ENCODE measurements at regions of chr2 and their contacts with region 1.

Region 1: DNA sequence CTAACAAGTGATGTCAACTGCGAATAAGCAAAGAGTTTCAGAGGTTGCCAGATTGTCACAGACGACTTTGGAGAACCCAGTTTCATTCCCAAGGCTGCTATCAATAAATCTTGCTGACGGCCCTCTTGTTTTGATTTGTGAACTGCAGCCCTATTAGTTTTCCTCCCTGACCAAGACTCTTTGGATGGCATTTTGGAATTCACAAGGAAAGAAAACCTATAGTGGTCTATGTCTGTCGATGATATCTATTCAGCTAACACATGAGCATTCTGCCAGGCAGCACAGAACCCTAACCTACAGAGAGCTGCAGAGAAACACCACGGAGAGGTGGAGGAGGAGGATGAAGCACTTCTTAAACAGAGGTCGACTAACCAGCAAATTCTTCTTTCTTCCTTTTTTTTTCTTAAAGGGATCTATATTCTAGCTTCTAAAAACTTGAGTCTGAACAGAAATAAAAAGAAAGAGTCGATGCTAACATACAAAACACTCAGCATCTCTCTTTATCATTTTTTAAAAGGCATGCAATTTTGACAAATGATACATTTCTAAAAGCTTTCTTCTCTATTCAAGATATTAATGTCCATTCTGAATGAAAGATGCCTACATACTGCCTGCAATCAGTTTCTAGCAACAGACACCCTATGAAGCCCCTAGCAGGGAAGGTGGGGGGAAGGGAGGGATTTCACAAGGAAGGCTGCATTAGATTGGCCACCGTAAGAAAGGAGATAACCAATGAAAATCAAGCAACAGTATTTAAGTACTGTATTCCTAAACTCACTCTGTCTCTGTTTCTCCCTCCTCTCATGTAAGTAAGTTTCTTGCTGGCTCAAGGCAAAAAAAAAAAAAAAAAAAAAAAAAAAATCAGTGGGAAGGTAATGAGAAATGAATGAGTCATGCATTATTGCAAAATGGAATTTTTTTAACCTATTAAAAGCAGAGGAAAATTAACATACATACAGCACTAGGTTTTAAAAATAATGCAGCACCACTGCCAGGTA is 83.0 kb upstream of the CHRNA1 start:
- DNase-seq: peak; percentile 50 to 81
- H3K4me3 ChIP-seq: no peak overlapping the region
- H3K27ac ChIP-seq: no peak overlapping the region
- H3K4me1 ChIP-seq: peaks cover 16% of the 10 kb centered on the region
- H3K27me3 ChIP-seq: no peaks in the 10 kb centered on the region
- CTCF ChIP-seq: no peak

Region 2: GRCh38 chr2:174473796-174474195 is 373.4 kb before region 1 on chr2:
- CTCF ChIA-PET with region 1: interaction called, 10 read pairs
- POLR2A ChIA-PET with region 1: no interaction called
- intact Hi-C with region 1: no loop called
- DNase-seq: no peak
- H3K4me3 ChIP-seq: no peak overlapping the region
- H3K27ac ChIP-seq: no peak overlapping the region
- H3K4me1 ChIP-seq: no peaks in the 10 kb centered on the region
- H3K27me3 ChIP-seq: no peaks in the 10 kb centered on the region
- CTCF ChIP-seq: no peak

Region 3: GRCh38 chr2:174771631-174772471 is 75.4 kb before region 1 on chr2:
- CTCF ChIA-PET with region 1: no interaction called
- POLR2A ChIA-PET with region 1: interaction called, 3 read pairs
- intact Hi-C with region 1: loop called (anchors 5 kb)
- DNase-seq: peak; percentile 70 to 82
- H3K4me3 ChIP-seq: no peak overlapping the region
- H3K27ac ChIP-seq: no peak overlapping the region
- H3K4me1 ChIP-seq: 0 out of 2 replicates have a peak, but pooled peaks cover 3% of the 10 kb centered on the region
- H3K27me3 ChIP-seq: no peaks in the 10 kb centered on the region
- CTCF ChIP-seq: peak; percentile 97

Region 4: GRCh38 chr2:174827371-174828369 is 19.6 kb before region 1 on chr2:
- CTCF ChIA-PET with region 1: no interaction called
- POLR2A ChIA-PET with region 1: interaction called, 7 read pairs
- intact Hi-C with region 1: loop called (anchors 1 kb)
- DNase-seq: peak; percentile 62 to 91
- H3K4me3 ChIP-seq: peak overlapping the region; percentile 31; the same call in 1 of the 2 replicates
- H3K27ac ChIP-seq: peak overlapping the region; percentile 69
- H3K4me1 ChIP-seq: peaks cover 41% of the 10 kb centered on the region
- H3K27me3 ChIP-seq: no peaks in the 10 kb centered on the region
- CTCF ChIP-seq: no peak

Region 5: DNA sequence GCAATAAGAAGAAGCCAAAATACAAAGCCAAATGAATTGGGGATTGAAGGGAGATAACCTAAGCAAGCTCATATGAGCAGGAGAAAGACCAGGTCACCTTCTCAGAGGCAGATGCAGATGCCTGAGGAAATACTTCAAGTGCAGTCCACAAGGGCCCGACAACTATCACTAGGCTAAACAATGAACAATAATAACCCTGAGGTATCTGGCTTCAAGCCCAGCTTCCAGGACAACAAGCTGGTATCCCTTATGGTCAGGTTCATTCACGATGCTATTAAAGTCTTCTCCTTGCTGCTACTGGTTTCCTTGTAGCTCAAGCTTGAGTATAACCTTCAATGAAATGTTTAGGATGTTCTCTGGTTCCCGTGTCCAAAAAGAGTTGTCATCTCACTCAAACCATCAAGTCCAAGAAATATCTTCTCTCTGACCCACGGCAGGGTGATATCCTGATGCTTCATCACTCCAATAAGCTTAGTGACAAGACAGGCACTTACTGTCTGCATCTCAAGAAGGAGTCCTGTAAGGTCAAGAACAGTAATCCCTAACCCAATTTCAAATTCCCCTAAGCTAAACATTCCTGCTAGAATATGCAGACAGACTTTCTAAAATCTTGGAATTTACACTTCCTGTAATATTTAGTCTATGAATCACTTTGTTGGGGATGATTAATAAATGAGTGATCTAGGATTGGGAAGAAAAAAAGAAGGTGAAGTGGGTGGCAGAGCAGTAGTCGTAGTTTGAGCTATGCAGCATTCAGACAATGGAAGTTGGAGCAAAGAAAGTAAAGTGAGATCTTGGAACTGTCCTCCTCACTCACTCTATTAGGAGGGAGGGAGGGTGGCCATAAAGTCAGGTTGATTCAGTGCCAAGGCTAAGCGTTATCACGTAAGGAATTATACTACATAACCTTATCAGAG is 124.9 kb after region 1 on chr2:
- CTCF ChIA-PET with region 1: no interaction called
- POLR2A ChIA-PET with region 1: interaction called, 10 read pairs
- intact Hi-C with region 1: no loop called
- DNase-seq: peak; percentile 68 to 75
- H3K4me3 ChIP-seq: no peak overlapping the region
- H3K27ac ChIP-seq: 0 out of 2 replicates have a peak overlapping the region, but pooled peaks have one; percentile 2
- H3K4me1 ChIP-seq: peaks cover 17% of the 10 kb centered on the region
- H3K27me3 ChIP-seq: no peaks in the 10 kb centered on the region
- CTCF ChIP-seq: no peak